Ovary (tissue), 10 donors: ENCODE measurements at regions of chr6 and their contacts with region 1.

Region 1: DNA sequence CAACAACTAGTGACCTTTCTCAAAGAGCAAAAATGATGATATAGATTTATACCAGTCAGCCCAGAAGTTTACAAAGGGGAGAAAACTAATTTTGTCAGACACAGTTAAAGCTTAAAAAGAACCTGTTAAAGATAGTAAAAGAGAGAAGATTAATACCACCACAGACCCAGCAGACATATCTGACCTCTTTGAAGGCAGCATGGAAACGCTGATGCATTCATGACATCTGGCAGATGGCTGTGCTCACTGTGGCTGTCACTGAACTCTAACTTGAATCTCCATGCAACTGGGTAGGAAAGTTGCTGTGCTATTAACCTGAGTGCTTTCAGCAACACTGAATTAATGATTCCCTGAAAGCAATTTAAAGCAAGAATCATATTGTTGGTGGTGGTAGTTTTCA is 159.8 kb upstream of the PRDM1 start:
- DNase-seq: no peak
- H3K4me3 ChIP-seq: no peak overlapping the region
- H3K27ac ChIP-seq: no peak overlapping the region
- H3K4me1 ChIP-seq: no peaks in the 10 kb centered on the region
- H3K27me3 ChIP-seq: no peaks in the 10 kb centered on the region
- CTCF ChIP-seq: no peak
- EP300 ChIP-seq: no peak
- POLR2A ChIP-seq: no peak

Region 2: GRCh38 chr6:104143757-104144156 is 1782.6 kb before region 1 on chr6:
- intact Hi-C with region 1: loop called in 1 of 4 experiments (anchors 5 kb)
- DNase-seq: no peak
- H3K4me3 ChIP-seq: no peak overlapping the region
- H3K27ac ChIP-seq: no peak overlapping the region
- H3K4me1 ChIP-seq: no peaks in the 10 kb centered on the region
- H3K27me3 ChIP-seq: no peaks in the 10 kb centered on the region
- CTCF ChIP-seq: no peak
- EP300 ChIP-seq: no peak
- POLR2A ChIP-seq: no peak

Region 3: DNA sequence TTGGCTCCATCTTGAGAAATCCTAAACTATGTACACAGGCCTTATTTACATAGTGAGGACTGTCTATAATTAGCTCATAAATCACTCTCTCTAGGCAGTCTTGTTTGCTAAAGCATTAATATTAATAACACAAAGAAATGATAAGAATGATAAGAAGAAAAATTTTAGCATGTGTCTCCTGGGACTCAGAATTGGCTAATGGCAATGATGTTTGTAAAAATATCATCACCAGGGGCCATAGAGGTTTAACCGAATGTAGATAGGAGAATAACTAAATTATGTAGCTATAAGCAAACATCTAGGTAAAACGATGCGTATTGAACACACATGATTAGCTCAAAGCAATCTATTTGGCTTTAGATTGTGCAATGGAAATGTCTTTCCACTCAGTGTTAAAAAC is 421.0 kb after region 1 on chr6:
- intact Hi-C with region 1: no loop called
- DNase-seq: no peak
- H3K4me3 ChIP-seq: no peak overlapping the region
- H3K27ac ChIP-seq: no peak overlapping the region
- H3K4me1 ChIP-seq: no peaks in the 10 kb centered on the region
- H3K27me3 ChIP-seq: no peaks in the 10 kb centered on the region
- CTCF ChIP-seq: no peak
- EP300 ChIP-seq: no peak
- POLR2A ChIP-seq: no peak